Panc1 (cell line): ENCODE measurements at regions of chr5 and their contacts with region 1.

Region 1: GRCh38 chr5:60763061-60763460 is 63.1 kb upstream of the DEPDC1B start:
- DNase-seq: no peak
- ATAC-seq: no peak
- H3K4me3 ChIP-seq: no peak overlapping the region
- H3K27ac ChIP-seq: no peak overlapping the region
- H3K4me1 ChIP-seq: no peaks in the 10 kb centered on the region
- H3K27me3 ChIP-seq: peaks cover 3% of the 10 kb centered on the region; the same call in 1 of the 2 replicates
- CTCF ChIP-seq: no peak

Region 2: DNA sequence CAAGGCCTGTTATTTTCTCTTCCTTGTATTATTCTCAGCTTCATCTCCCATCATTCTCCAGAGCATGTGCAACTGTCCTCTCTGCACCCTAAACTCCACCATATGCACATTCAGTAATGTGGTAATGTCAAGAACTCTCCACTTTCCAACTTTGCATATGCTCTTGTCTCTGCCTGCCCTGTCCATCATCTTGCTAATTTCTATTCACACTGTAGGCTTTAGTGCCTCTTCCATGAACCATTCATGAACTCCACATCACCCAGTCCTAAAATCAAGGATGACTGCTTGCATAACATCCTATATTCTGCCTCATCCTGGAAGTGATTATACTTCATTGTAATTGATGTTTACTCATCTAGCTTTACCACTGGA is 1224.3 kb before region 1 on chr5:
- CTCF ChIA-PET with region 1: interaction called, 10 read pairs
- POLR2A ChIA-PET with region 1: no interaction called
- in situ Hi-C with region 1: no loop called
- intact Hi-C with region 1: no loop called
- DNase-seq: no peak
- ATAC-seq: no peak
- H3K4me3 ChIP-seq: no peak overlapping the region
- H3K27ac ChIP-seq: no peak overlapping the region
- H3K4me1 ChIP-seq: no peaks in the 10 kb centered on the region
- H3K27me3 ChIP-seq: no peaks in the 10 kb centered on the region
- CTCF ChIP-seq: no peak

Region 3: GRCh38 chr5:60649283-60649917 is 113.7 kb before region 1 on chr5:
- CTCF ChIA-PET with region 1: no interaction called
- POLR2A ChIA-PET with region 1: no interaction called
- in situ Hi-C with region 1: no loop called
- intact Hi-C with region 1: no loop called
- DNase-seq: peak; percentile 20
- ATAC-seq: no peak
- H3K4me3 ChIP-seq: no peak overlapping the region
- H3K27ac ChIP-seq: no peak overlapping the region
- H3K4me1 ChIP-seq: no peaks in the 10 kb centered on the region
- H3K27me3 ChIP-seq: no peaks in the 10 kb centered on the region
- CTCF ChIP-seq: peak; percentile 70; the same call in 1 of the 2 replicates

Region 4: DNA sequence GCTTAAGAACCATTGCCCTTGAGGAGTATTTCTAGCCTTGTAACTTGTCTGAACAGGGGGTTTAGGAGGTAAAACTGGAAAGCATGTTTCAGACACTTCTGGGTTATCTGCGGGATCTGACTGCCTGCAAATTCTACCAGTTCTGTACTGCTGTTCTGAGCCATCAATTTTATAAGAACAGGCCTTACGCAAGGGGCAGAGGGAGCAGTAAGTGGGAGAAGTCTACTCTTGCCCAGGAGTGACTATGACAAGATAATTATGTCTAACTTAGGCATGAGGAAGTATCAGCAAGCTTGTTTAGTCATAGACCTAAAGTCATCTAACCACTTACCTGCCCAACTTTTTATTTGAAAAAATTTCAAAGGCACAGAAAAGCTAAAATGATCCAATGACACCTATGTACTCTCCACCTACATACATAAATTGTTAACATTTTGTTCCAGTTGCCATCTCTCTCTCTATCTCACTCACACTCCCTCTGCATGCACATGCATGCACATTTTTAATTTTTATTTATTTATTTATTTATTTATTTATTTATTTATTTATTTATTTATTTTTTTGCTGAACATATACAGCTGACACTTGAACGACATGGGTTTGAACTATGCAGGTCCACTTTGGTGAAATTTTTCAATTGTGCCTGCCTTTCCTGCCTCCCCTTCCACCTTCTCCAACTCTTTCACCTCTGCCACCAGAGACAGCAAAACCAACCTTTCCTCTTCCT is 44.7 kb before region 1 on chr5:
- CTCF ChIA-PET with region 1: no interaction called
- POLR2A ChIA-PET with region 1: no interaction called
- in situ Hi-C with region 1: no loop called
- intact Hi-C with region 1: no loop called
- DNase-seq: no peak
- ATAC-seq: no peak
- H3K4me3 ChIP-seq: no peak overlapping the region
- H3K27ac ChIP-seq: no peak overlapping the region
- H3K4me1 ChIP-seq: no peaks in the 10 kb centered on the region
- H3K27me3 ChIP-seq: peaks cover 3% of the 10 kb centered on the region; the same call in 1 of the 2 replicates
- CTCF ChIP-seq: no peak